Endothelial cell of umbilical vein (primary cell): ENCODE measurements at regions of chr13 and their contacts with region 1.

Region 1: GRCh38 chr13:76886292-76887075 is at the start of gene KCTD12:
- DNase-seq: peak; percentile 91
- H3K4me3 ChIP-seq: peak within 1 kb of the TSS; percentile 91 to 98 (median 95)
- H3K27ac ChIP-seq: peak within 1 kb of the TSS; percentile 84
- H3K4me1 ChIP-seq: peaks cover 21% of the 10 kb centered on the region
- H3K27me3 ChIP-seq: no peaks in the 10 kb centered on the region
- CTCF ChIP-seq: peak; percentile 23 to 45
- POLR2A ChIP-seq: peak; percentile 98
- total RNA-seq, gene KCTD12: 90.8 and 116 TPM in 2 replicates

Region 2: DNA sequence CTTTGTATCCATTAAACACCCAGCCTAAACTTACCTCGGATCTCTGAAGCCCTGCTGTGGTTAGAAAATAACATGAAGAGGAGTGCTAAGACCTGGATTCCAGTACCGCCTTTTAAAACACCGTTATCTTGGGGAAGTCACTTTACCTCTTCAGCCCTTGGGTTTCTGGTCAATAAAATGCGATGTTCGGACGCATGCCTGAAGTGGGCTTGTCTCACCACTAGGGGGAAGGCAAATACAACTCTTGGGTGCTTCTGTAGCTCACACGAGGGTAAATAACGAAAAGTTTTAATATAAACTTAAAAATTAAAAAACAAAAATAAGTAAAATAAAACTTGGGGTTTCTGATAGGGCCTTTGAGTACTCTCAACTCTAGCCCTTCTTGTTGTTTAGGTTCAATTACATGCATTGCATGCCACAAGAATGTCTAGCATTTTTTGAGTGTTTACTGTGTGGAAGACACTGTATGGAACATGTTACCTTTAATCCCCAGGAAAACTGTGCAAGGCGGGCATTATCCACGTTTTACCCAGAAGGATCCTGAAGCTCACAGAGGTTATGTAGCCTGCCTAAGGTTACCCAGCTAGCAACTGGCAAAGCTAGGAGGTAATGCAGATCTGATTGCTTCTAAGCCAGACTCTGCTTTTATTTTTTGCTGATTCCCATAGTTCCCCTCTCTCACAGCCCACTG is 1010.0 kb before region 1 on chr13:
- CTCF ChIA-PET with region 1: interaction called, 13 read pairs
- POLR2A ChIA-PET with region 1: no interaction called
- dilution Hi-C with region 1: no loop called
- intact Hi-C with region 1: loop called (anchors 5 kb)
- DNase-seq: peak; percentile 74
- H3K4me3 ChIP-seq: no peak overlapping the region
- H3K27ac ChIP-seq: no peak overlapping the region
- H3K4me1 ChIP-seq: no peaks in the 10 kb centered on the region
- H3K27me3 ChIP-seq: peaks cover 0 to 2% of the 10 kb centered on the region in 2 experiments
- CTCF ChIP-seq: peak; percentile 76 to 78
- POLR2A ChIP-seq: no peak

Region 3: GRCh38 chr13:76667551-76667950 is 218.9 kb before region 1 on chr13:
- CTCF ChIA-PET with region 1: interaction called, 145 read pairs
- POLR2A ChIA-PET with region 1: interaction called, 11 read pairs
- dilution Hi-C with region 1: no loop called
- intact Hi-C with region 1: loop called (anchors 1 kb)
- DNase-seq: peak; percentile 89
- H3K4me3 ChIP-seq: no peak overlapping the region
- H3K27ac ChIP-seq: no peak overlapping the region
- H3K4me1 ChIP-seq: no peaks in the 10 kb centered on the region
- H3K27me3 ChIP-seq: no peaks in the 10 kb centered on the region
- CTCF ChIP-seq: peak; percentile 21 to 39
- POLR2A ChIP-seq: no peak

Region 4: GRCh38 chr13:76754414-76754813 is 132.1 kb before region 1 on chr13:
- CTCF ChIA-PET with region 1: interaction called, 13 read pairs
- POLR2A ChIA-PET with region 1: interaction called, 5 read pairs
- dilution Hi-C with region 1: no loop called
- intact Hi-C with region 1: loop called (anchors 1 kb)
- DNase-seq: peak; percentile 90
- H3K4me3 ChIP-seq: no peak overlapping the region
- H3K27ac ChIP-seq: peak overlapping the region; percentile 47
- H3K4me1 ChIP-seq: peaks cover 24% of the 10 kb centered on the region
- H3K27me3 ChIP-seq: no peaks in the 10 kb centered on the region
- CTCF ChIP-seq: no peak
- POLR2A ChIP-seq: no peak

Region 5: DNA sequence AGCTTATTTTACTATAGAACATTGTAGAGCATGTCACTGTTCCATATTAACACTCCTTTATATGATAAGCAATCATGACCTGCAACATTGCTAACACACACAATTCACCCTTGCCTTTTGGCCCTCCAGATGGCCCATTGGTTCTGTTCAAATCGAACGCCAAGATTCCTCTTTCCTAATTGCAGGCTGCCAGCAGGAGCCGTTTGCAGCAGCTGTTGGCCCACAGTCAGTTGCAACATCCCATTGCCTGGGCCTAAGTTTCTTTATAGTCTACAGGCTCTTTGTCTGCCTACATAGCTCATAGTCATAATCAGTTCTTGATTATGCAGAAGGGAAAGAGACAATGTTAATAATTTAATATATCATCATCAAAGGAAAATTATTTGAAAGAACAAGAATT is 37.9 kb before region 1 on chr13:
- CTCF ChIA-PET with region 1: interaction called, 21 read pairs
- POLR2A ChIA-PET with region 1: interaction called, 4 read pairs
- dilution Hi-C with region 1: no loop called
- intact Hi-C with region 1: loop called (anchors 1 kb)
- DNase-seq: no peak
- H3K4me3 ChIP-seq: no peak overlapping the region
- H3K27ac ChIP-seq: no peak overlapping the region
- H3K4me1 ChIP-seq: peaks cover 13% of the 10 kb centered on the region
- H3K27me3 ChIP-seq: no peaks in the 10 kb centered on the region
- CTCF ChIP-seq: no peak
- POLR2A ChIP-seq: no peak

Region 6: GRCh38 chr13:76991796-76992547 is 105.5 kb after region 1 on chr13 and contains the start of gene CLN5:
- CTCF ChIA-PET with region 1: interaction called, 3 read pairs
- POLR2A ChIA-PET with region 1: no interaction called
- dilution Hi-C with region 1: no loop called
- intact Hi-C with region 1: loop called (anchors 5 kb)
- DNase-seq: peak; percentile 87
- H3K4me3 ChIP-seq: peak within 1 kb of the TSS; percentile 36 to 90 (median 83)
- H3K27ac ChIP-seq: peak within 1 kb of the TSS; percentile 40
- H3K4me1 ChIP-seq: peaks cover 13% of the 10 kb centered on the region
- H3K27me3 ChIP-seq: peaks cover 4% of the 10 kb centered on the region in 2 experiments
- CTCF ChIP-seq: no peak
- POLR2A ChIP-seq: peak; percentile 81
- total RNA-seq, gene CLN5: 22.7 and 22.8 TPM in 2 replicates